ENCODE measurements at regions of chr6 and their contacts with region 1.

Region 1: DNA sequence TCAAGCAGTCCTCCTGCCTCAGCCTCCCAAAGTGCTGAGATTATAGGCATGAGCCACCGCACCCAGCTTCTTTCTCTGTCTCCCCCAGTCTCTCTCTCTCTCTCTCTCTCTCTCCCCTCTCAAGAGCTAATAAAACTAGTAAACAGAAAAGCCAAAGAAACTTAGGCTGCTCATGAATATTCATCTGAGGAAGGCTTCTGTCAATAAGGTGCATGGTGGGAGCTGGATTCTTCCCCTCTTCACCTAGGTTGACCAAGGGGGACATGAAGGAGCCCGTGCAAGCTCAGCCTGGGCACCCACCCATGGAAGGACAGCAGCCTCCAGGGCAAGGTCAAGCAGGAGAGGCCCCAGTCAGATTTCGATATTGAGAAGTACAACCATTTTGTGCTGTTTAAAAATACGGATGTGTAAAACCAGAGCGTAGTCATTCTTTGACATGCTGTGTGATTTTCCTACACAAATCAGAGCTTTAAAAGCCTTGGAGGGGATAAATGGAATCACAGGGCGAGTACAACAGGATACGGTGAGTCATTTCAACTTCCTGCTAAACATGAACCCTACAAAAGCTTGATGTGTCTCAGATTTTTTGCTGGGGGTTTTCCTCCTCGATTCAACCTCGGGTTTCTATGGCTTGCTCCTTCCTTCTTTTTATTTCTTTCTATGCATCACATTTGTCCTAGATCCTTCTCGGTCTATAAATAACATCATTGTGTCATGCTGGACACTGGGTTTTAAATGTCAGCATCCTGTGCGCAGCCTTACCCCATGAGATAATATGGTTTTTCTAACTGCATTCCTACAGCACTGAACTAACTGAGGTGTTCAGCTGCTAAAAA is 368.9 kb upstream of the JARID2 start:
- DNase-seq: no peak
- ATAC-seq: peak; percentile 74

Region 2: GRCh38 chr6:14228571-14228970 is 648.4 kb before region 1 on chr6:
- intact Hi-C with region 1: no loop called
- DNase-seq: no peak
- ATAC-seq: no peak

Region 3: GRCh38 chr6:14975471-14975817 is 98.4 kb after region 1 on chr6:
- intact Hi-C with region 1: no loop called
- DNase-seq: no peak
- ATAC-seq: no peak

Region 4: DNA sequence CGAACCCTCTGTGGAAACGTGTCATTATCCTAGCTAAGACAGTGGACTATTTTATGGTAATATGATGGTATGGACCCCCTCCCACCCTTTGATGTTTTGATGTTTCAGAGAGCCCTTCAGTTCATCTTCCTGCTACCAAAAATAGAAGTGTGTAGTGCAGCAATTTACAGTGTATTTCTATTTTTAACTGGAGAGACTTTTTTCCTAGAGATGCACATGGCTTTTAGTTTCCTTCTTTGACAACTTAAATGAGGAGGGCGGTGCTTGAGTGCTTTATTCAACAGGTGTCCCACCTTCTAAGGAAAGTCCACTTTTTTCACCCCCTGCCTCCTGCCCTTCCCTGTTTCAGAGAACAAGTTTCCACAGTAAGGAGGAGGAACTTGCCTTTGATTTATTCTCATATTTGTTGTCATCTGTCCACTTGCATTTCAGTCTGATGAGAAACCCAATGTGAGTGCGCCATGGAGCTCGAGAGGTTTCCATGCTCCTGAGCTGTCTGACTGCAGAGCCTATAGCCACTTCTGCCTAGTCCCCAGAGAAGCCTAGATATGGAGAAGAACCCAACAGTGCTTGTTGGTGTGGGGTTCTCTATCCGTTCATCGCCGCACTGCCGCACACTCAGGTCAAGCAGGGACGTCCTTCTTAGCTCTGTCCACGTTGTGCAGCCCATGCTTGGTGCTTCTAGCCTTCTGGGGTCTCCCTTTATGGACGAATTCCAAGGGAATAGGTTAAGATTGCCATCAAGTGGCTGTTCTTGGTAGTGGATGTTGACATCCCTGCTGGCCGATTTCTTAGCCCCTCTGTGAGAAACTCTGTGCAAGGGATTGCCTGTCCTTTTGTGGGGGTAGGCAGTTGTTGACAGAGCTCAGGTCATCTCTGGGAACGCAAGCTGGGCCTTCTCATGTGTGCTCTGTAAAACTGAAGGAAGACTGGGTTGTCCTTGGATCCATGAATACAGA is 513.0 kb after region 1 on chr6:
- intact Hi-C with region 1: loop called (anchors 5 kb)
- DNase-seq: no peak
- ATAC-seq: peak; percentile 29

Region 5: GRCh38 chr6:15504581-15505350 is 627.8 kb after region 1 on chr6:
- intact Hi-C with region 1: loop called (anchors 5 kb)
- DNase-seq: peak; percentile 83
- ATAC-seq: peak; percentile 80